Psoas muscle (tissue), 8 donors: ENCODE measurements at regions of chr1 and their contacts with region 1.

Region 1: DNA sequence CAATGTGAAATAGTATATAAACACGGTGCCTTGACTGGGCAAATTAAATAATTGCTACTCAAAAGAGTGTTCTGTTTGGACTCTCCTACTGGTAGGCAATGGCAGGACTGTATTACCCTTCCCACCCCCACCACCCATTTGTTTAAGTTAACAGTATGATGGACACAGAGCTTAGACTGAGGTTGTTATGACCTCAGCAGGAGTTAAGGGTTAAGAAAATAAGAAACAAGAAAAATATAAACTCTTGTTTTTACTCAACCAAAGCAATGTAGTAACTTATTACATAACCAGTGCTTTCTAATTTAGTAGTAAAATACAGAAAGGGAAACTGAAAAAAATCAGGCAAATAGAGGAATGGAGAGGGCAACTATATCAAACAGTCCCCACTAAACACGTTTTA is 19.9 kb upstream of the SERPINC1 start:
- DNase-seq: no peak
- ATAC-seq: no peak
- H3K4me3 ChIP-seq: no peak overlapping the region
- H3K27ac ChIP-seq: no peak overlapping the region
- H3K4me1 ChIP-seq: no peaks in the 10 kb centered on the region
- H3K27me3 ChIP-seq: no peaks in the 10 kb centered on the region
- CTCF ChIP-seq: no peak

Region 2: GRCh38 chr1:173489149-173489934 is 447.7 kb before region 1 on chr1:
- intact Hi-C with region 1: loop called in 1 of 2 experiments (anchors 10 kb)
- DNase-seq: no peak
- ATAC-seq: peak in 3 of 4 donors; percentile 26 to 40 (median 29)
- H3K4me3 ChIP-seq: no peak overlapping the region
- H3K27ac ChIP-seq: no peak overlapping the region
- H3K4me1 ChIP-seq: no peaks in the 10 kb centered on the region
- H3K27me3 ChIP-seq: no peaks in the 10 kb centered on the region
- CTCF ChIP-seq: no peak

Region 3: GRCh38 chr1:173669491-173669941 is 267.5 kb before region 1 on chr1 and contains the start of gene ANKRD45:
- intact Hi-C with region 1: no loop called
- DNase-seq: no peak
- ATAC-seq: no peak
- H3K4me3 ChIP-seq: peak within 1 kb of the TSS; percentile 49
- H3K27ac ChIP-seq: no peak within 1 kb of the TSS
- H3K4me1 ChIP-seq: no peaks in the 10 kb centered on the region
- H3K27me3 ChIP-seq: peaks cover 0 to 18% (median 0%) of the 10 kb centered on the region in 3 donors
- CTCF ChIP-seq: no peak
- total RNA-seq, gene ANKRD45: not detected

Region 4: DNA sequence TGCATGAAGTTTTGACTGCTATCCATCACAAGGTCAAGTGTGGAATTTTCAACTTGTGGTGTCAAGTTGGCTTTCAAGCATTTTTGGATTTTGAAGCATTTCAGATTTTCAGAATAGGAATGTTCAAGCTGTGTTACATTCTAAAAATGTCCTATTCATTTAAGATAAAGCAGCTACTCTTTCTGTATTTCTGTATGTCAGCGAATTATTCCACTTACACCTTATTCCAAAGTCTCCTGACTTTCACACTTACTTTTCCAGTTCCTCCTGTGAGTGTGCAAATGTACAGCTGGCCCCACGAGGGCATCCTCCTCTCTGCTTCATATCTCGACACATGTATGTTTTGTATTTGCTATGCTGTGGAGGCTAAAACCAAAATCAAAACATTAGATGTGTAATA is 33.2 kb after region 1 on chr1:
- intact Hi-C with region 1: loop called in 1 of 2 experiments (anchors 5 kb)
- DNase-seq: no peak
- ATAC-seq: no peak
- H3K4me3 ChIP-seq: no peak overlapping the region
- H3K27ac ChIP-seq: no peak overlapping the region
- H3K4me1 ChIP-seq: no peaks in the 10 kb centered on the region
- H3K27me3 ChIP-seq: no peaks in the 10 kb centered on the region
- CTCF ChIP-seq: no peak